Stomach (tissue), 19 donors: ENCODE measurements at regions of chr6 and their contacts with region 1.

Region 1: GRCh38 chr6:40308533-40309306 is 278.4 kb downstream of the LRFN2 start:
- DNase-seq: peak; percentile 67 to 78
- H3K4me3 ChIP-seq: no peak overlapping the region
- H3K27ac ChIP-seq: no peak overlapping the region
- H3K4me1 ChIP-seq: peaks cover 0 to 7% (median 3%) of the 10 kb centered on the region in 4 donors
- H3K27me3 ChIP-seq: peaks cover 0 to 24% (median 5%) of the 10 kb centered on the region in 3 donors
- CTCF ChIP-seq: peak in 6 of 7 experiments; percentile 75 to 95 (median 92)
- EP300 ChIP-seq: no peak
- POLR2A ChIP-seq: no peak

Region 2: DNA sequence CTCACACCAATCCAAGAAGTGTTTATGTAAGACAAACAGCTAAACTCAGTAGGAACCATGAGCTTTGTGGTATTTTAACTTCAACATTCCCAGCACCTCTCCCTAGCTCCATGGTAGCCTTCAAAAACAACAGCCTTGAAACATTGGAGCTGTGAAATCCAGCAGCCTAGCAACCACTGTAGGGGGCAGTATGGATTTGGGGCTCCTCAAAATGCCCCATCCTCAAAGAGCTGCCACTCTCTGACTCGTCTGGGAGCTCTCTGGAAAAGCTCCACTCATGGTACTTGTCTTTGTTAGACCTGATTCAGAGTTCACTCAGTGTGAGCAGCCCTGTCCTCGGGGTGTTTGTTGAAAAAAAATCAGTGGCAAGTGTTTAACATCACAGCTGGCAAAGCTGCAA is 666.5 kb before region 1 on chr6:
- intact Hi-C with region 1: no loop called
- DNase-seq: no peak
- H3K4me3 ChIP-seq: no peak overlapping the region
- H3K27ac ChIP-seq: no peak overlapping the region
- H3K4me1 ChIP-seq: no peaks in the 10 kb centered on the region
- H3K27me3 ChIP-seq: no peaks in the 10 kb centered on the region
- CTCF ChIP-seq: no peak
- EP300 ChIP-seq: no peak
- POLR2A ChIP-seq: no peak

Region 3: GRCh38 chr6:39952167-39952566 is 356.6 kb before region 1 on chr6:
- intact Hi-C with region 1: no loop called
- DNase-seq: no peak
- H3K4me3 ChIP-seq: no peak overlapping the region
- H3K27ac ChIP-seq: no peak overlapping the region
- H3K4me1 ChIP-seq: no peaks in the 10 kb centered on the region
- H3K27me3 ChIP-seq: peaks cover 0 to 4% (median 0%) of the 10 kb centered on the region in 3 donors
- CTCF ChIP-seq: no peak
- EP300 ChIP-seq: no peak
- POLR2A ChIP-seq: no peak

Region 4: DNA sequence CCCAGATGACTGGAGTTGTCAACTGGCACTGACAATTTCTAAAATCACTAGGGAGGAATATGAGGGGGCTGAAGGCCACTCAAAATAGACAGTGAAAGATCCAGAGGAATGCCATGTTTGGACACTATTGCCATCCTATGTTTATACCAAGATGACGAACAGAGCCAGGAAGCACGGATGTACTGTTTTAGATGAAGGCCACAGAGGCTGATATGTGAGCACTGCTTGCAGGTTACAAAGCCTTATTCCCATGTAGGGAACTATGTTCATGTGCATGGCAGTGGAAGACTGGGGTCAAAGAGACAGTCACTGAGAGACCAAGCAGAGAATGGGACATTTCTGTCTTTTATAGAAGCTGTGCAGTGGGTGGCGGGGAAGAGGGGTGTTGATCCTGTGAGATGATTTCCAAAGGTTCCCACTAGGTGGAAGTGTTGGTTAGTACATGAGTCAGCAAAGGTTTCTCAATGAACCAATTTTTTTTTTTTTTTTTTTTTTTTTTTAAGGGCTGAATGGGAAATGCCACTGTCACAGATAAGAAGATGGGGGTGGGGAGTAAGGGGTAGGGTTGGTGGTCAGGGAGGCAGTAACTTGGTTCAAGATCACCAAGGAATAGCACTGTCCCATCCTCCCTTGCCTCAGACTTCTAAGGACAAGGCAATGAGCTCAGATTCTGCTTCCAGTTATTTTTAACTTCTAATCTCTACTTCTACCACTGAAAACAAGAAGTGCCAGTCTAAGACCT is 327.7 kb before region 1 on chr6:
- intact Hi-C with region 1: loop called (anchors 5 kb)
- DNase-seq: peak in 1 of 2 donors; percentile 84
- H3K4me3 ChIP-seq: no peak overlapping the region
- H3K27ac ChIP-seq: peak overlapping the region in 1 of 5 donors; percentile 16
- H3K4me1 ChIP-seq: peaks cover 0 to 12% (median 3%) of the 10 kb centered on the region in 4 donors
- H3K27me3 ChIP-seq: no peaks in the 10 kb centered on the region
- CTCF ChIP-seq: peak in 5 of 7 experiments; percentile 18 to 57 (median 41)
- EP300 ChIP-seq: no peak
- POLR2A ChIP-seq: no peak

Region 5: GRCh38 chr6:40356242-40356910 is 47.7 kb after region 1 on chr6:
- intact Hi-C with region 1: no loop called
- DNase-seq: peak in 1 of 2 donors; percentile 0
- H3K4me3 ChIP-seq: no peak overlapping the region
- H3K27ac ChIP-seq: no peak overlapping the region
- H3K4me1 ChIP-seq: no peaks in the 10 kb centered on the region
- H3K27me3 ChIP-seq: peaks cover 0 to 5% (median 0%) of the 10 kb centered on the region in 3 donors
- CTCF ChIP-seq: no peak
- EP300 ChIP-seq: no peak
- POLR2A ChIP-seq: no peak

Region 6: DNA sequence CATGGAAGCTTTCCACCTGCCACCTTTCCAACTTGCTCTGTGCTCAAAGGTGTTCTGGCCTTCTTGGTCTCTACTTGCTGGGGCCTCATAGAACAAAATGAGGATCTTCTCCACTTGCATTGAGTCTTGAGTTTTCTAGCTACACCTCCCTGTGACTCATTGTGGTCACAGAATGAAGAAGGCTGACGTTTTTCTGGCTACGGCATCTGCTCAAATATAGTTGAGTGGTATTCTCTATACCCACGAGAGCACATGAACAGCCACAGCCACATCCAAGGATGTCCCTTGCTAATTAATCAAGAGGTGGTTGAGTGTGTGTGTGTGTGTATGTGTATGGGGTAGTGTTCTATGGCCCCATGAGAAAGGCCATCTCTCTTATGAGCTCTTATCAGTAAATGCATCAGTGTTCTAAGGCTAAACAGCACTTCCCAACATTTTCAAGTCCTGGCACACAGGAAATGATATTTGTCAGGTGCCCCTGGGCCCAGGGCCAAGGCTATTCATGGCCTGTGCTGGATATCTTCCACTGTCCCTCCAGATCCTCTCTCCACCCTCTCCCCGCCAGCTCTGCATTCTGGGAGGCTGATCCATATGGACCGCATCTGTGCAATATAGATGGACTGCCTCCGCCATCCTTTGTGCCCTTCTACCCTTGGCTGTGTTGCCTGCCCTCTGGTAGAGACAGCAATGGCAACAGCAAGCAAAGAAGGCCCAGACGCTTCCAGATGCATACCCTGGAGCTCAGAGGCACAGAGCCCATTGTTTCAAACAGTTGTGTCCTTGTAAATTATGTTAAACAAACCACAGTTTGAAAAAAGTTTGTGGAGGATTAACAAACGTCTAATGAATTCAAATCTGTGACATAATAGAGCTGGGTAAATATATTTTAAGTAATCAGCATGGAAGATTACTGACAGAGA is 128.2 kb after region 1 on chr6:
- intact Hi-C with region 1: no loop called
- DNase-seq: no peak
- H3K4me3 ChIP-seq: no peak overlapping the region
- H3K27ac ChIP-seq: no peak overlapping the region
- H3K4me1 ChIP-seq: no peaks in the 10 kb centered on the region
- H3K27me3 ChIP-seq: no peaks in the 10 kb centered on the region
- CTCF ChIP-seq: no peak
- EP300 ChIP-seq: no peak
- POLR2A ChIP-seq: no peak